Left cardiac atrium (tissue), 4 donors: ENCODE measurements at regions of chr2 and their contacts with region 1.

Region 1: DNA sequence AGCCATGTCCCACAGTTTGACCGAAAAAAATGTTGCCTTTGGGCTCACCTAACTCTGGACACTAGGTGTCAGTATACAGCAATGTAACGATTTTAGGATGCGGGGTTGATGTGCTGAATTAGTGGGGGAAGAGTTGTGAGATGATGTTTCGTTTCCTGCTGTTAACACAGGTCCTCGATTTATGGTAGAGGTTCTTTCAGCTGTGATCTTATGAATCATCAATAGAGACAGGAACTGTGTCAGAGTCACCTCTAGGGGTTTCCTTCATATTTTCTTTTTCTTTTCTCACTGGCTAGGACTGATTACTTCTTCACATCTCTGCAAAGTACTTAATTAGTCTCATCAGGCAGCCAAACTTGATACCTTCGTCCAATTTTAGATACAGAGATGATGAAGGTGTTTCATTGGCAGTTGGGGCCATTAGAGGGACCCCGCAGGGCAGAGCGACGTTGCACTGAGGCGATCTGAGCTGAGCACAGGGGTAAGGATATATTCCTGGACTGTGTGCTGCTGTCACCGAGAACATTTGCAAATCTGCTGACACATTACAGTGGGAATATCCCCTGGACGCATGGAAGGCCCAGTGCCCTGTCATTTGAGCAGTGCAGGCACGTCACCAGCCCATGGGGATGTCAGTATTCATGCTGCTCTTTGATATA is 10.2 kb upstream of the MMADHC start:
- DNase-seq: no peak
- ATAC-seq: peak; percentile 90 to 92

Region 2: DNA sequence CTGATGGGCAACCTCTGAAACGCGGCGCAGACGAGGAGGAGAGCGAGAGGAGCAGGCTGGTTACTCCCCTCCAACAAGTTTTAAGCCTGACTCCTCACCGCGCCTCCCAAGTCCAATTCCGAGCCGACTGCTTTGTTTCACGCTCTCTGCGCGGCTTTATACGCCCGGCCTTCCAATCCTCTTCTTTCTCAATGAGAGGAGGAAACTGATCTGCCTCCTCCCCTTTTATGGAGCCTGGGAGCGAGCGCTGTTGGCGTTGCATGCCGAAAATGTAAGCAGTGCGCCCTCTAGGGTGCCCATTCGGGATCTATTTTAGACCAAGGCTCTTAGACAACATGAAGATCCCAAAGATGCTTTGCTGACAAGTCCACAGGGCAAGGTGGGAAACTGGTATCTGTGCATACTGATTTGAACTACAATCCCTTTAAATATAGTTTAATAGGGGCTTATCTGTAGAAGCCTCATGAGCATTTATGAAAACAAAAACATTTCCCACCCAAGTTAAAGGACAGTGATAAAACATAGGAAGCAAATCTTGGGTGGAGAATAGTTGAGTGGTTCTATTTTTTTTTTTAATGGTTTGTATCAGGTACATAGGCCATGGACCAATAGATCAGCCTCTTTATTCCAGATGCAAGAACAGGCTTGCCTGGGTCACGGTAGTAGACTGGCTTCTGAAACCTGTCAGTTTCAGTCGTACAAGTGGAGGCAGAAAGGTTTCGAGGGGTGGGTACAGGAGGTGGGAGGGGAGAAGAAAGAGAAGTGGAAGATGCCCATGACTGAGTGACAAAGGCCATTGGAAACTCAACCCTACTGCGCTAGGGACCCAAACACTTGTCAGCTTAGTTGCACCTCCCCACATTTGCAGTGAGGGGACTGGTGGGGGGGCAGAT is 890.0 kb after region 1 on chr2 and contains the start of gene RND3:
- intact Hi-C with region 1: loop called (anchors 5 to 10 kb)
- DNase-seq: peak; percentile 96
- ATAC-seq: peak; percentile 77 to 83
- total RNA-seq, gene RND3: 18.5 to 29.2 TPM

Region 3: DNA sequence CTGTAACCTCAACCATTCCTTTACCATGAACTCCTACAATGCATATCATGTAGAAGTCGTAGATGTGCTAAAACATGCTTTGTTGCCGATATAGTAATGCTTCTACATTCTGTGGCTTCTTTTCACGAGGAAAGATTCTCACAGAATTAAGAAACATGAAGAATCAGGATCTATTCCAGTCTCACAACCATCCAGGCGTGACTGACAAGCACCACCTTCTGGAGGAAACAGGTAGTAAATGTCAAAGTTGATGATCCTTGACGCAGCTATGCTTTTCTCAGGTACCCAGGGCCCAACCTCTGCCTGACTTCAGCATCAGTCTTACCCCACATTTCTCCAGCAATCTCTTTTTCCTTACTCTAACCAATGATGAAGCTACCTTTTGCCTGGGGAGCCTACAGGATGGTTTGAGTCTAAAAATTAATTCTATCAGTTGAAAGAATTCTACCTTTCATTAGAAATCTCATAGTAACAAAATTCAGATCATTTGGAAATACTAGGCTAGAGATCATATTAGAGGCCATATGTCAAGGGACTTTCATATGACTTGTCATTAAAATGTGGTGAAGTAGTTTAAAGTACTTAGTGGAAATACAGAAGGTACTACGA is 1013.0 kb after region 1 on chr2:
- intact Hi-C with region 1: loop called in 1 of 2 experiments (anchors 5 kb)
- DNase-seq: no peak
- ATAC-seq: no peak

Region 4: DNA sequence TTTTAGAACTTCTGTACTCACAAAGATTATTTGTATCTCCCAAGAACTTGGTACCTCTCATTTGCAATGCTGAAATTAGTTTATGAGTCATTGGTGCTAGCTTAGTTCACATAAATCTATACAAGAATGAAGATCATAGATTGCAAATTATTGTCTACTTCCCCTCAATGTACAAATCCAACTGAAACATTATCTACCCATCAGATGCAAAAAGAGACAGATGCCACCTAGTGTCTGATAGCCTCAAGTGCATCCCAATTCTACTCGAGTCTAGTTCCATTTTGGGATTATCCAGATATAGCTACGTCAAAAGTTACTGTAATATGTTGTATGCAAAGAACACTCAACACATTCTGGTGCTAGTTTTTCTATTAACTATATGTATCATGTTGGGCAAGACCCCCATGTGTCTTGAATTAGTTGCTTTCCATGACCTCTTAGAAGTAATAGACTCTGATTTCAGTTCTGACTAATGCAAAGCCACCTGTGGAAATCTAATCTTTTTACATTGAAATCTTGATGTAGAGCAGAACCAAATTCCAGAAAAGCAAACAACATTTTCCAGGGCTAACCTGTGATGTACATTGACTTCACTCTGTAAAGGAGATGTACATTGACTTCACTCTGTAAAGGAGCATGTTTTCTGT is 1453.9 kb after region 1 on chr2:
- intact Hi-C with region 1: loop called in 1 of 2 experiments (anchors 10 kb)
- DNase-seq: no peak
- ATAC-seq: peak in 1 of 2 donors; percentile 41

Region 5: GRCh38 chr2:151238527-151239487 is 1641.0 kb after region 1 on chr2:
- intact Hi-C with region 1: loop called (anchors 2 to 10 kb)
- DNase-seq: peak; percentile 70
- ATAC-seq: peak; percentile 84 to 89